ENCODE measurements at regions of chr7 and their contacts with region 1.

Region 1: GRCh38 chr7:12403287-12404181 is at the start of gene VWDE:
- DNase-seq: peak; percentile 42
- H3K27ac ChIP-seq: no peak within 1 kb of the TSS
- CTCF ChIP-seq: no peak

Region 2: DNA sequence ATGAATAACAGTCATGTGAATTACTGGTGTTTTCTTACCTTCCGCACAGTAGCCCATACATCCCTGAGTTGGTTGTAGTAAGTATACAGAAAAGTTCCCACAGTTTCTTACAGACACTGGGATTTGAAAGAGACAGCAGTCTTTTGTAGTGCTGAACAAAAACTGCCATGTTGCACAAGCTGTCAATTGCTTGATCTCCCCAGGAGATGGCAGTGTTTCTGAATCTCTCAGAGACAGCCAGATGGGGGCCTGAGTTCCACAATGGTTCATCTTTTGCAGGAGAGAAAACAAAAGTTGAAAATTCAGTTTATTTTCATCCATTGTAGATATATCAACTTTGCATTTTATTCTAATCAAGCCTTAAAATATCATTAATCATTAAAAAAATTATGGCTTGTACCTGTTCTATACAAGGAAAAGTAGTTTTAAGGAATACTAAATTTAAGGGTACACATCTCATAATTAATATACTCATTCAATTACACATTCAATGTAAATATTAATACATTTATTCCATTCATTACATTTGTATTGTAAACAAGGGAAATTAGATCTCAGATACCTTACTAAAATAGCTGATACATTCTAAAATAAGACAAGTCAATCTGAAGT is 14.3 kb before region 1 on chr7:
- CTCF ChIA-PET with region 1: interaction called, 11 read pairs
- POLR2A ChIA-PET with region 1: no interaction called
- DNase-seq: peak; percentile 50
- H3K27ac ChIP-seq: no peak overlapping the region
- CTCF ChIP-seq: peak; percentile 91

Measured in RWPE1 (cell line).